Left colon (tissue), 2 donors: ENCODE measurements at regions of chr10 and their contacts with region 1.

Region 1: GRCh38 chr10:79374312-79375191 is 27.3 kb downstream of the PPIF start:
- DNase-seq: peak; percentile 65 to 78
- ATAC-seq: peak; percentile 84

Region 2: GRCh38 chr10:79069325-79070080 is 305.0 kb before region 1 on chr10:
- intact Hi-C with region 1: no loop called
- DNase-seq: peak in 1 of 2 donors; percentile 74
- ATAC-seq: peak; percentile 6

Region 3: DNA sequence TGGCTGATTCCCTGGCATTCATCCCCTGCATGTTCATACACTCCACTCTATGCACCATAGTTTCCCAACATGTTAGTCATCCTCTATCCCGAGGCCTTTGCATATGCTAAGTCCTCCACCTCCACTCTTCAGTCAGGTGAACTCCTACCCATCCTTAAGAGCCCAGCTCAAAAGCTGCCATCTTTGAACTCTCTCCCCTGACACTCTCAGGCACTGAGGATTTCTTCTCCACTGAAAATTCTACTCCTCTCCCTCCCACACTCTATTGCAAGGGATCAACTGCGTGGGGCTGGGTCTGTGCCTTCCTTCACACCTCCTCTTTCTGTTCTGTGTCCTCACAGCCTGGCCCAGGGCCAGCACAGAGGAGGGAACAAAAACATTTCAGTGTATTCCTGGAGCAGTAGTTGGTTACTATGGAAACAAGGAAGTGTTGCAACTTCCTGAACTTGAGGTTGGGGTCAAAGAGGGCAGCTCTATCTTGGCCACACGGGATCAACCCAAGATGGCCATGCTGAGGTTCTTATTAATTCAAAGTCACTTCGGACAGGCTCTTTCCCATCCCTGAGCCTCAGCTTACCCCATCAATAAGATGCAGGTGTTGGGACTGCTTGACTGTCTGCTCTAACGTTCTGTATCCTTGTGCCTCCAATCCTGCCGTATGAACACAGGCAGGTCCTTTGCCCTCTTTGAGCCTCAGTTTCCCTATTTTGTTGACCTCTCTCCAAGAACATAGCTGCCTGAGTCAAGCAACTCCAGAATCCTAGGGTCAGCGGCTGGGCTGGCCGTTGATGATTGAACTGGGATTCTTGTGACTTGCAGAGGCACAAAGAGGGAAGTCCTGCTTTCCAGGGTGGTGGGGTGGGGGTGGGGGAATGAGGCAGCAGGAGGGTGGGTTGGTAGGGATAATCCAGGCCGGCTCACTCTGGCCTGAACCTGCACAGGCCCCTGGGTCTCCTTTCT is 290.3 kb before region 1 on chr10:
- intact Hi-C with region 1: no loop called
- DNase-seq: peak; percentile 90 to 94
- ATAC-seq: peak; percentile 66

Region 4: GRCh38 chr10:79316671-79317431 is 57.7 kb before region 1 on chr10:
- intact Hi-C with region 1: no loop called
- DNase-seq: no peak
- ATAC-seq: no peak

Region 5: DNA sequence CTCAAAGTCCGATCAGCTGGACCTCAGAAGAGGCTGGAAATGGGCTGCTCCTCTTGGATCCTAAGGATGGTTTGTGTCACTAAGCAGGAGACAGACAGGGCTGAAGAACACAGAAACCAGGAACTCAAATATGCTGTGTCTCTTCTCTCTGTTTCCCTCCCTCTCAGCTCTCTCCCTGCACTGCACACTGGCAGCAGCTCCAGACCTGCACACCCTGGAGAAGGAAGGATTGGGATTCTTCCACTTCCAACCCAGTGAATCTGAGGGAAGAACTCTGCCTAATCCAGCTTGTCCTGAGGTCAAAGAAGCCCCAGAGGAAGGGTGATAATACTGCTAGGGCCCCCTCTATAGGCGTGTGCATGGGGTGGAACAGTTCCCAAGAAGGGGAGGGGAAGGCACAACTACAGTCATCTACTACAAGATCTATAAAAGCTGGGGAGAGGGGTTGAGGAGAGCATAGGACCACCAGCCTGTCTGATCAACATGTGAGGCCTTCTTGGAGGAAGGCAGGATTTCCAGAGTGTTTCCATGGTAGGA is 93.5 kb after region 1 on chr10:
- intact Hi-C with region 1: loop called in 1 of 2 experiments (anchors 5 kb)
- DNase-seq: no peak
- ATAC-seq: peak; percentile 20

Region 6: GRCh38 chr10:79487296-79488194 is 113.0 kb after region 1 on chr10:
- intact Hi-C with region 1: loop called in 1 of 2 experiments (anchors 10 kb)
- DNase-seq: peak; percentile 39 to 50
- ATAC-seq: peak; percentile 79